ENCODE measurements at regions of chr16 and their contacts with region 1.

Region 1: DNA sequence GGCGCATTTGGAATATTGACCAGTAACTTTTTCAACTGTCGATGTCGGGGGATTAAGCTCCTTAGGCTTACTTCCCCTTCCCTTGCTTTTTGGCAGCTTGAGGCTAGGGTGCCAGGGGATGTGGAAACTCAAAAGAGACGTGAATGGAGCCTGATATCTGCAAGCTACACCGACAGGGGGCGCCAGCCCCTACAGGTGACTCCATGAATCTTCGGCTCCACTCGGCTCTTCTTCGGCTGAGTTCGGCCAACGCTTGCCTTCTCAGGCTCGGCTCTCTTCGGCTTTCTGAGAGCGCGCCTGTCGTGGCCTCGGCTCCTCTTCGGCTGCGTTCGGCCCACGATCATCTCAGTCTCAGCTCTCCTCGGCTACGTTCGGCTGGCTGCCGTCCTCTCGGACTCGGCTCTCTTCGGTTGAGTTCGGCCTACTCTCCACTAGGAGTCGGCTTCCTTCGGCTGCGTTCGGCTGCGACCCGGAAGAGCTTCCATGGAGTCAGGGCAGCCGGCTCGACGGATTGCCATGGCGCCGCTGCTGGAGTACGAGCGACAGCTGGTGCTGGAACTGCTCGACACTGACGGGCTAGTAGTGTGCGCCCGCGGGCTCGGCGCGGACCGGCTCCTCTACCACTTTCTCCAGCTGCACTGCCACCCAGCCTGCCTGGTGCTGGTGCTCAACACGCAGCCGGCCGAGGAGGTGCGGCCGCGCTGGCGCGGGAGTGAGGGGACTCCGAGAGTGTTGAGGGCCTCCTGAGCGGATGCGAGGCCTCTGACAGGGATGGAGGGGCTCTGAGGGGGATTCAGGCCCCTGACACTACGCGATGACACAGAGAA is at the start of gene ERCC4:
- DNase-seq: peak; percentile 96
- ATAC-seq: peak; percentile 99
- H3K4me3 ChIP-seq: peak within 1 kb of the TSS; percentile 87
- H3K27ac ChIP-seq: peak within 1 kb of the TSS; percentile 54
- H3K4me1 ChIP-seq: no peaks in the 10 kb centered on the region
- H3K27me3 ChIP-seq: no peaks in the 10 kb centered on the region
- CTCF ChIP-seq: peak; percentile 89 to 97 (median 96)
- EP300 ChIP-seq: no peak
- POLR2A ChIP-seq: peak; percentile 97
- RAD21 ChIP-seq: peak; percentile 41; the same call in 1 of the 2 replicates
- polyA plus RNA-seq, gene ERCC4: 5.7 to 15.6 TPM

Region 2: DNA sequence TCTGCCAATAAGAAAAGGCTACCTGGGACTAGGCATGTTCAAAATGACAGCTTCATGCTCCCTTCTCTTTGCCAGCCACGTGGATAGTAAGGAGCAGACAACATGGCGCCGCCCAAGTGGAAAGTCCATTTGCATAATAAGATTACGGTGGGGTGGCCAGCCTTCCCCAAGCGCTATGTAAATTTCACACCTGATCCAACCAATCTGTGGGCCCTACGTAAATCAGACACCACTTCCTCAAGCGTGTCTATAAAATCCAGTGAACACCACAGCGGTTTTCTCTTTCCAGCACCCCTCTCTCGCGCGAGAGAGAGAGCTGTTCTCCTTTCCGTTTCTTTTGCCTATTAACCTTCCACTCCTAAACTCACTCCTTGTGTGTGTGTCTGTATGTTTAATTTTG is 140.2 kb before region 1 on chr16:
- CTCF ChIA-PET with region 1: no interaction called
- POLR2A ChIA-PET with region 1: no interaction called
- RAD21 ChIA-PET with region 1: no interaction called
- SMC1A ChIA-PET with region 1: no interaction called
- in situ Hi-C with region 1: no loop called
- intact Hi-C with region 1: no loop called
- DNase-seq: no peak
- ATAC-seq: no peak
- H3K4me3 ChIP-seq: no peak overlapping the region
- H3K27ac ChIP-seq: no peak overlapping the region
- H3K4me1 ChIP-seq: no peaks in the 10 kb centered on the region
- H3K27me3 ChIP-seq: no peaks in the 10 kb centered on the region
- CTCF ChIP-seq: no peak
- EP300 ChIP-seq: no peak
- POLR2A ChIP-seq: no peak
- RAD21 ChIP-seq: no peak

Region 3: DNA sequence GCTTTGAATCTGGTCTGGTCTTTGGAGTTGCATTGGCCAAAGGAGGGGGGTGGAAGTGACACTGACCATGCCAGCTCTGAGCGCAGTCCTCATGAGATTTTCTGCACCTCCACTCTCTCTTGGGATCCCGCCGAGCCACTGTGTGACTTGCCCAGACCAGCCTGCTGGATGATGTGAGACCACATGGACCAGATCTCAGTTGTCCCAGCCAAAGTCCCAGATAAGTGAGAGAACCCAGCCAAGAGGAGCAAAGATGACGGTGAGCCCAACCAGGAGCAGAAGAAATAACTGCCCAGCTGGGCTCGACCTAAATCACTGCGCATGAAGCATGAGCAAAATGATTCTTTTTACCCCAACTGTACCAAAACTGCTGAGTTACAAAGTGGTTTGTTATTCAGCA is 96.4 kb before region 1 on chr16:
- CTCF ChIA-PET with region 1: no interaction called
- POLR2A ChIA-PET with region 1: no interaction called
- RAD21 ChIA-PET with region 1: no interaction called
- SMC1A ChIA-PET with region 1: no interaction called
- in situ Hi-C with region 1: no loop called
- intact Hi-C with region 1: no loop called
- DNase-seq: no peak
- ATAC-seq: no peak
- H3K4me3 ChIP-seq: no peak overlapping the region
- H3K27ac ChIP-seq: no peak overlapping the region
- H3K4me1 ChIP-seq: no peaks in the 10 kb centered on the region
- H3K27me3 ChIP-seq: no peaks in the 10 kb centered on the region; a peak in 1 of 4 replicates
- CTCF ChIP-seq: no peak
- EP300 ChIP-seq: no peak
- POLR2A ChIP-seq: no peak
- RAD21 ChIP-seq: no peak

Region 4: GRCh38 chr16:13906168-13907089 is 13.5 kb before region 1 on chr16:
- CTCF ChIA-PET with region 1: interaction called, 26 read pairs
- POLR2A ChIA-PET with region 1: no interaction called
- RAD21 ChIA-PET with region 1: interaction called, 4 read pairs
- SMC1A ChIA-PET with region 1: interaction called, 6 read pairs
- in situ Hi-C with region 1: no loop called
- intact Hi-C with region 1: no loop called
- DNase-seq: no peak
- ATAC-seq: peak; percentile 57; the same call in 2 of the 3 replicates
- H3K4me3 ChIP-seq: no peak overlapping the region
- H3K27ac ChIP-seq: no peak overlapping the region
- H3K4me1 ChIP-seq: peaks cover 3% of the 10 kb centered on the region; the same call in 1 of the 2 replicates
- H3K27me3 ChIP-seq: no peaks in the 10 kb centered on the region; a peak in 1 of 4 replicates
- CTCF ChIP-seq: no peak
- EP300 ChIP-seq: no peak
- POLR2A ChIP-seq: no peak
- RAD21 ChIP-seq: no peak

Region 5: GRCh38 chr16:13957197-13958078 is 37.5 kb after region 1 on chr16:
- CTCF ChIA-PET with region 1: interaction called, 5 read pairs
- POLR2A ChIA-PET with region 1: no interaction called
- RAD21 ChIA-PET with region 1: interaction called, 6 read pairs
- SMC1A ChIA-PET with region 1: interaction called, 8 read pairs
- in situ Hi-C with region 1: no loop called
- intact Hi-C with region 1: loop called (anchors 5 kb)
- DNase-seq: peak; percentile 56
- ATAC-seq: peak; percentile 84
- H3K4me3 ChIP-seq: peak overlapping the region; percentile 70
- H3K27ac ChIP-seq: peak overlapping the region; percentile 85
- H3K4me1 ChIP-seq: peaks cover 29% of the 10 kb centered on the region
- H3K27me3 ChIP-seq: no peaks in the 10 kb centered on the region
- CTCF ChIP-seq: no peak
- EP300 ChIP-seq: peak; percentile 28 to 31; a peak in 3 of 4 replicates
- POLR2A ChIP-seq: 0 out of 2 replicates have a peak, but pooled peaks have one; percentile 18
- RAD21 ChIP-seq: no peak

Region 6: DNA sequence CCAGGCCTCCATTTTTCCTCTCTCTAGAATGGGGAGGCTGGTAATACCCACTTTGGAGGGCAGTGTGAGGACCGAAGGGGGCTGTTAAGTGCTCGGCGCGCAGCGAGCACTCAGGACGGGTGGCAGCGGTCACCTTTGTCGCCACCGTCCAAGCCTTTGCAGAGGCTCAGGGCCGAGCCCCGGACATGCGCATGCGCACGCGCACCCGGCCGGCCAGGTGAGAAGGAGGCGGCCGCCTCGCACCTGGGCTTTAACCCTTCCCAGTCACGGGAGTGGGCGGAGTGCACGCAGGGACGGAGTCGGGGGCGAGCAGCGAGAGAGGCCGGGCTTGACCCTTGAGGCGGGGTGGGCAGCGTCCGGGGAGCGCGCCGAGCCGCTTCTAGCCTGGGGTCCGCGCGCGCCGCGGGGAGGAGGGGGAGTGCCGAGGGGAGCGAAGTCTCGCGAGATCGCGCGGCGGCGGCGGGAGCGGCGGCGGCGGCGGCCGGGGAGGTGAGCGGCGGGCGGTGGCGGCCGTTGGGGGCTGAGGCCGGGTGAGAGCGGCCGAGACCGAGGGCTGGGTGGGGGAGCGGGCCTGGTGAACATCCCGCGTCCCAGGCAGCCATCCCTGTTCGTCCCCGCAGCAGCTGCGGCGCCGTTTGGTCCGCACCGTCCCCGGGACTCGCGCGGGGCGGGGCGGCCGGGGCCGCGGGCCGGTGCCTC is 151.1 kb after region 1 on chr16 and contains the start of gene MRTFB:
- CTCF ChIA-PET with region 1: interaction called, 6 read pairs
- POLR2A ChIA-PET with region 1: no interaction called
- RAD21 ChIA-PET with region 1: interaction called, 6 read pairs
- SMC1A ChIA-PET with region 1: interaction called, 5 read pairs
- in situ Hi-C with region 1: no loop called
- intact Hi-C with region 1: loop called (anchors 2 kb)
- DNase-seq: peak; percentile 25
- ATAC-seq: peak; percentile 93
- H3K4me3 ChIP-seq: peak within 1 kb of the TSS; percentile 98
- H3K27ac ChIP-seq: peak within 1 kb of the TSS; percentile 64
- H3K4me1 ChIP-seq: peaks cover 2% of the 10 kb centered on the region; the same call in 1 of the 2 replicates
- H3K27me3 ChIP-seq: no peaks in the 10 kb centered on the region
- CTCF ChIP-seq: no peak
- EP300 ChIP-seq: no peak
- POLR2A ChIP-seq: peak; percentile 69
- RAD21 ChIP-seq: no peak
- polyA plus RNA-seq, gene MRTFB: 2.1 to 4.0 TPM

Region 7: GRCh38 chr16:14240219-14240843 is 320.4 kb after region 1 on chr16:
- CTCF ChIA-PET with region 1: interaction called, 20 read pairs
- POLR2A ChIA-PET with region 1: no interaction called
- RAD21 ChIA-PET with region 1: interaction called, 11 read pairs
- SMC1A ChIA-PET with region 1: interaction called, 62 read pairs
- in situ Hi-C with region 1: loop called (anchors 5 kb)
- intact Hi-C with region 1: no loop called
- DNase-seq: no peak
- ATAC-seq: no peak
- H3K4me3 ChIP-seq: no peak overlapping the region
- H3K27ac ChIP-seq: no peak overlapping the region
- H3K4me1 ChIP-seq: no peaks in the 10 kb centered on the region
- H3K27me3 ChIP-seq: no peaks in the 10 kb centered on the region
- CTCF ChIP-seq: no peak
- EP300 ChIP-seq: no peak
- POLR2A ChIP-seq: no peak
- RAD21 ChIP-seq: no peak

Region 8: GRCh38 chr16:14285513-14286385 is 365.9 kb after region 1 on chr16:
- CTCF ChIA-PET with region 1: interaction called, 31 read pairs
- POLR2A ChIA-PET with region 1: no interaction called
- RAD21 ChIA-PET with region 1: interaction called, 39 read pairs
- SMC1A ChIA-PET with region 1: interaction called, 48 read pairs
- in situ Hi-C with region 1: loop called (anchors 5 kb)
- intact Hi-C with region 1: loop called (anchors 1 kb)
- DNase-seq: peak; percentile 87
- ATAC-seq: peak; percentile 89
- H3K4me3 ChIP-seq: peak overlapping the region; percentile 89
- H3K27ac ChIP-seq: peak overlapping the region; percentile 76
- H3K4me1 ChIP-seq: peaks cover 8% of the 10 kb centered on the region
- H3K27me3 ChIP-seq: no peaks in the 10 kb centered on the region
- CTCF ChIP-seq: no peak
- EP300 ChIP-seq: peak; percentile 10 to 49; a peak in 1 of 4 replicates
- POLR2A ChIP-seq: no peak
- RAD21 ChIP-seq: no peak